GM12878 (cell line): ENCODE measurements at regions of chr4 and their contacts with region 1.

Region 1: DNA sequence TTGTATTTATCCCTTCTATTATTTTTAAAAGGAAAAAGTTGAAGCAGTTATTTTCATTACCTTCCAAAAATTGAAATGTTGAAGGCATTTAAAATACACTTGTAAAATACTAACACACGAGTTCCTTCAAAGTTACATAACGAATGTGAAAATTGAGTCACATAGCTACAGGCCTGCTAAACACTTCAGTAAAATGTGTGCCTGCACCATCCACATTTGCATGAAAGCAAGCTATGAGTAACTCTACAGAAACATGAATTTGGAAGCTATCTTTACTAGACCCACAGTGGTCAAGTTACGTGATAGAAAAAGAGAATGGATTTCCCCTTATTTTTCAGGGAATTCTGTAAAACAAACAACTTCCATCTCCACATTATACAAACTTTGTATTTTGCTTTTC is 1148.8 kb upstream of the PCDH7 start:
- DNase-seq: no peak
- ATAC-seq: peak; percentile 81
- H3K4me3 ChIP-seq: no peak overlapping the region
- H3K27ac ChIP-seq: no peak overlapping the region
- H3K4me1 ChIP-seq: no peaks in the 10 kb centered on the region
- H3K27me3 ChIP-seq: no peaks in the 10 kb centered on the region
- CTCF ChIP-seq: no peak
- EP300 ChIP-seq: no peak
- POLR2A ChIP-seq: no peak
- RAD21 ChIP-seq: no peak

Region 2: DNA sequence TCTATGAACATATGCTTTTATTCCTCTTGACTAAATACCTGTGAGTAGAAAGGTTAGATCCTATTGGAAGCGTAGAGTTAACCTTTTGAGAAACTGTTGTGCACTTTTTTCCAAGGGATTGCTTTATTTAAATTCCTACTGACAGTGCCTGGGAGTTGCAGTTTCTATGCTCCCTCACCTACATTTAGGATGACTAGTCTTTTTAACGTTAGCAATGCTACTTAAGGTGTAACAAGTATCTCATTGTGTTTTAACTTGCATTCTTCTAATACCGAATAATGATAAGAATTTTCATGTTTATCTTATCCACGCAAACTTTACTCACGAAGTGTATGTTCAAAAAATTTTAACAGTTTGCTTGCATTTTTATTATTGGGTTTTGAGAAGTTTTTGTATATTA is 24.9 kb after region 1 on chr4:
- CTCF ChIA-PET with region 1: no interaction called
- POLR2A ChIA-PET with region 1: no interaction called
- RAD21 ChIA-PET with region 1: no interaction called
- SMC1A ChIA-PET with region 1: no interaction called
- in situ Hi-C with region 1: no loop called
- intact Hi-C with region 1: loop called (anchors 1 kb)
- DNase-seq: no peak
- ATAC-seq: no peak
- H3K4me3 ChIP-seq: no peak overlapping the region
- H3K27ac ChIP-seq: no peak overlapping the region
- H3K4me1 ChIP-seq: no peaks in the 10 kb centered on the region
- H3K27me3 ChIP-seq: no peaks in the 10 kb centered on the region
- CTCF ChIP-seq: no peak
- EP300 ChIP-seq: no peak
- POLR2A ChIP-seq: no peak
- RAD21 ChIP-seq: no peak